ENCODE measurements at regions of chr14 and their contacts with region 1.

Region 1: GRCh38 chr14:93126111-93126510 is 10.4 kb upstream of the ITPK1 start:
- DNase-seq: no peak
- ATAC-seq: no peak
- H3K4me3 ChIP-seq: no peak overlapping the region
- H3K27ac ChIP-seq: no peak overlapping the region
- H3K4me1 ChIP-seq: no peaks in the 10 kb centered on the region
- H3K27me3 ChIP-seq: no peaks in the 10 kb centered on the region
- CTCF ChIP-seq: no peak
- POLR2A ChIP-seq: no peak

Region 2: GRCh38 chr14:93173943-93174395 is 47.9 kb after region 1 on chr14:
- in situ Hi-C with region 1: no loop called
- intact Hi-C with region 1: loop called (anchors 2 kb)
- DNase-seq: no peak
- ATAC-seq: no peak
- H3K4me3 ChIP-seq: no peak overlapping the region
- H3K27ac ChIP-seq: no peak overlapping the region
- H3K4me1 ChIP-seq: no peaks in the 10 kb centered on the region
- H3K27me3 ChIP-seq: no peaks in the 10 kb centered on the region
- CTCF ChIP-seq: no peak
- POLR2A ChIP-seq: no peak